Ascending aorta (tissue), 2 donors: ENCODE measurements at regions of chr10 and their contacts with region 1.

Region 1: GRCh38 chr10:80199828-80200227 is 5.5 kb downstream of the ANXA11 start:
- DNase-seq: peak in 1 of 2 donors; percentile 84
- H3K4me3 ChIP-seq: peak overlapping the region; percentile 32 to 43
- H3K27ac ChIP-seq: peak overlapping the region; percentile 96 to 97
- H3K4me1 ChIP-seq: peaks cover 6 to 82% of the 10 kb centered on the region in 2 donors
- H3K27me3 ChIP-seq: no peaks in the 10 kb centered on the region
- CTCF ChIP-seq: peak; percentile 16 to 39 (median 32)

Region 2: GRCh38 chr10:80168679-80169380 is 31.0 kb before region 1 on chr10:
- intact Hi-C with region 1: loop called (anchors 2 kb)
- DNase-seq: no peak
- H3K4me3 ChIP-seq: peak overlapping the region in 1 of 2 donors; percentile 3
- H3K27ac ChIP-seq: peak overlapping the region; percentile 84 to 86
- H3K4me1 ChIP-seq: peaks cover 27 to 53% of the 10 kb centered on the region in 2 donors
- H3K27me3 ChIP-seq: no peaks in the 10 kb centered on the region
- CTCF ChIP-seq: peak in 1 of 3 experiments; percentile 17